Sigmoid colon (tissue), 7 donors: ENCODE measurements at regions of chr1 and their contacts with region 1.

Region 1: GRCh38 chr1:100921109-100921706 is 25.3 kb downstream of the SLC30A7 start:
- DNase-seq: no peak
- H3K4me3 ChIP-seq: no peak overlapping the region
- H3K27ac ChIP-seq: no peak overlapping the region
- H3K4me1 ChIP-seq: no peaks in the 10 kb centered on the region
- H3K27me3 ChIP-seq: no peaks in the 10 kb centered on the region
- CTCF ChIP-seq: peak; percentile 43 to 63 (median 52)
- EP300 ChIP-seq: no peak
- POLR2A ChIP-seq: no peak

Region 2: GRCh38 chr1:101238681-101239094 is 317.5 kb after region 1 on chr1:
- intact Hi-C with region 1: loop called (anchors 5 kb)
- DNase-seq: peak; percentile 87
- H3K4me3 ChIP-seq: peak overlapping the region in 3 of 4 donors; percentile 53 to 70 (median 60)
- H3K27ac ChIP-seq: peak overlapping the region in 3 of 4 donors; percentile 21 to 90 (median 76)
- H3K4me1 ChIP-seq: peaks cover 0 to 32% (median 20%) of the 10 kb centered on the region in 4 donors
- H3K27me3 ChIP-seq: peaks cover 0 to 21% (median 0%) of the 10 kb centered on the region in 3 donors
- CTCF ChIP-seq: peak; percentile 39 to 85 (median 72)
- EP300 ChIP-seq: no peak
- POLR2A ChIP-seq: no peak

Region 3: DNA sequence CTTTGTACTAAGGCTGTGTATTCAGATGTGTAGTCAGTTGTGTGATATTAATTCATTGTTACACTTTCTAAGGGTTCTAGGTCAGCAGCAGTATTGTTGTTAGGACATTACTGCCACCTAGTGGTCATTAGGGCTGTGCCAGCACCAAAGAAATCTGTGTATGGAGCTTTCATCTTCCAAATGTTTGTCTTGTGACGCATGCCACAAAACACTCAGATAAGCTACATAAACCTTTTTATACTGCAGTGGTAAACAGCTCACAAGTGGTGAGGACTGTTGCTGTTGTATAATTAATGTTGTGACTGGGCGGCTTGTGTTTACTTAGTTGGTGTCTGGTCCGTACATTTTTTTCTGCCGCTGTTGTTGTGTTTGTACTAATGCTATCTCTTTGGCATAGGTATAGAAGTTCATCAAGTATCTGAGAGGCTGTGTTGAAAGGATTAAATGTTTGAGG is 367.3 kb after region 1 on chr1:
- intact Hi-C with region 1: loop called (anchors 1 kb)
- DNase-seq: peak; percentile 75
- H3K4me3 ChIP-seq: no peak overlapping the region
- H3K27ac ChIP-seq: no peak overlapping the region
- H3K4me1 ChIP-seq: no peaks in the 10 kb centered on the region
- H3K27me3 ChIP-seq: no peaks in the 10 kb centered on the region
- CTCF ChIP-seq: peak; percentile 52 to 92 (median 79)
- EP300 ChIP-seq: no peak
- POLR2A ChIP-seq: no peak